Activated T-helper 1 cell treated with anti-CD3 and anti-CD28 coated beads, Interleukin-12 subunit alpha, Interleukin-12 subunit beta, Interleukin-2, Interleukin-4 antibody, amounts not matched to agents 30 ng/mL and 10 ng/mL and 1 ng/mL, durations not matched to agents 14 hours and 24 hours and 36 hours (primary cell): ENCODE measurements at regions of chr19 and their contacts with region 1.

Region 1: GRCh38 chr19:45340232-45340898 is at the start of gene KLC3:
- DNase-seq: peak; percentile 35
- H3K4me3 Mint-ChIP-seq: peak within 1 kb of the TSS; percentile 54
- H3K27ac Mint-ChIP-seq: no peak within 1 kb of the TSS
- H3K4me1 Mint-ChIP-seq: peaks cover 6% of the 10 kb centered on the region
- H3K27me3 Mint-ChIP-seq: peaks cover 10% of the 10 kb centered on the region
- total RNA-seq, gene KLC3: not detected in 2 replicates

Region 2: DNA sequence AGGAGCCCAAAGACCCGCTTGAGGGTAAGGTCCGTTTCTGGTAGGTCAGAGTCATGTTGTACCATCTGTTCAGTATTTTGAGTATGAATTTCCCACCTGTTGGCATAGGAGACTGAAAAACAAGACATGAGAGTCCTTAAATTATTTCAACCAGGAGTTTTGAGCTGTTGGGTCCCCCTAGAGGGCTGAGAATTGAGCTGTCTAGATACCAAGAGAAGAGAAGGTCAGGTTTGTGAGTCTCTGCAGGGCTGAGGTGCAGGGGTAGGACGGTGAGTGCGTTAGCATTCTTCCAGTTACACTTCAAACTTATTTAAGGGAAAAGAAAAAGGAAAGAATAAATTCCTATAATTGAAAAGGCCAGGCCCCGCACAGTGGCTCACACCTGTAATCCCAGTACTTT is 557.6 kb before region 1 on chr19:
- intact Hi-C with region 1: loop called (anchors 1 kb)
- DNase-seq: no peak
- H3K4me3 Mint-ChIP-seq: no peak overlapping the region
- H3K27ac Mint-ChIP-seq: no peak overlapping the region
- H3K4me1 Mint-ChIP-seq: no peaks in the 10 kb centered on the region
- H3K27me3 Mint-ChIP-seq: peaks cover 2% of the 10 kb centered on the region

Region 3: GRCh38 chr19:45187421-45188100 is 152.8 kb before region 1 on chr19:
- intact Hi-C with region 1: loop called (anchors 1 kb)
- DNase-seq: no peak
- H3K4me3 Mint-ChIP-seq: no peak overlapping the region
- H3K27ac Mint-ChIP-seq: no peak overlapping the region
- H3K4me1 Mint-ChIP-seq: no peaks in the 10 kb centered on the region
- H3K27me3 Mint-ChIP-seq: peaks cover 2% of the 10 kb centered on the region

Region 4: GRCh38 chr19:45238556-45238955 is 101.8 kb before region 1 on chr19:
- intact Hi-C with region 1: no loop called
- DNase-seq: no peak
- H3K4me3 Mint-ChIP-seq: no peak overlapping the region
- H3K27ac Mint-ChIP-seq: no peak overlapping the region
- H3K4me1 Mint-ChIP-seq: no peaks in the 10 kb centered on the region
- H3K27me3 Mint-ChIP-seq: peaks cover 20% of the 10 kb centered on the region

Region 5: DNA sequence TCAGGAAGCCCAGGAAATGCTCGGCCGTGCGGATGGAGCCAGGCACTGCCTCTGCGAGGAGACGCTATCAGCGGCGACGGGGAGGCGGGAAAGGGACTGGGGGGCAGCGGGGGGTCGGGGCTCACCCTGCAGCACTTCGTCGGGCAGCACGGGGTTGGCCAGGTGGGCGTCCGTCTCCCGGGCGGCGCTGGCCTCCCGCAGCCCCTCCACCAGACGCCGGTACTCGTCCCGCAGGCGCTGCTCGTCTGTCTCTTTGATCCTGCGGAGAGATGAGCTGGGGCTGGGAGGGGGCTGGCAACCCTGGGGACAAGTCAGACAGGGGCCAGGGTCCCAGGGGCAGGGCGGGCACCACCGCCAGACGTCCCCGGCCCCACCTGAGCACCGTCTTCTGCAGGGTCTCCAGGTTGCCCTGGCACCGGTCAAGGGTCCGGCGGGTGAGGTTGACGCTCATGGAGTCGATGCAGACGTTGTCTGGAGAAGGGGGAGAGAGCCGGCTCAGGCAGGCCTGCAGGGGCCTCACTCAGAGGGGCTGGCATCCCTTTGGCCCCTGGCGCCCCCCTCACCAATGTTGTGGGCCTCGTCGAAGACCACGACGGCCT is 23.6 kb after region 1 on chr19:
- intact Hi-C with region 1: no loop called
- DNase-seq: no peak
- H3K4me3 Mint-ChIP-seq: no peak overlapping the region
- H3K27ac Mint-ChIP-seq: no peak overlapping the region
- H3K4me1 Mint-ChIP-seq: peaks cover 8% of the 10 kb centered on the region
- H3K27me3 Mint-ChIP-seq: no peaks in the 10 kb centered on the region

Region 6: GRCh38 chr19:45419396-45419795 is 79.0 kb after region 1 on chr19:
- intact Hi-C with region 1: no loop called
- DNase-seq: no peak
- H3K4me3 Mint-ChIP-seq: peak overlapping the region; percentile 33
- H3K27ac Mint-ChIP-seq: peak overlapping the region; percentile 23
- H3K4me1 Mint-ChIP-seq: peaks cover 47% of the 10 kb centered on the region
- H3K27me3 Mint-ChIP-seq: peaks cover 1% of the 10 kb centered on the region